Heart right ventricle (tissue), 16 donors: ENCODE measurements at regions of chr18 and their contacts with region 1.

Region 1: DNA sequence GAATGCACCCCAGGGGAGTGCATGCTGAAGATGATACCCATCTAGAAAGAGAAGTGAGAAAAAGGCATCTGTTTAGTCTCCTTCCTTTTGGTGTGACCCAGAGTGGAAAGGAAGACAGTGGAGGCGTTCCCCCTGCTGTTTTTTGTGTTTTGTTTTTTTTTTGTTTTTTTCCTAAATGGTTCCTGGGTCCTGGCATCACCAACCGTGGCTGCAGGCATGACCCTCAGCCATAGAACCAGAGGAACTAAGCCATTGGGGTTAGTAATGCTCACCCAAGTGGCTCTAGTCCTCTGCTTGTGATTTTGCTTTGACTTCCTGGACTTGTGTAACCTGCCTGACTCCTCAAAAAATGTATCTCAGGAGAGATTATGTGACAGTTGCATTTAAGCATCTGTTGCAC is 451.3 kb downstream of the DCC start:
- DNase-seq: no peak
- ATAC-seq: no peak
- H3K4me3 ChIP-seq: no peak overlapping the region
- H3K27ac ChIP-seq: no peak overlapping the region
- H3K4me1 ChIP-seq: no peaks in the 10 kb centered on the region
- H3K27me3 ChIP-seq: no peaks in the 10 kb centered on the region
- CTCF ChIP-seq: no peak

Region 2: GRCh38 chr18:52829876-52830405 is 38.6 kb after region 1 on chr18:
- intact Hi-C with region 1: loop called in 1 of 10 experiments (anchors 1 kb)
- DNase-seq: no peak
- ATAC-seq: no peak
- H3K4me3 ChIP-seq: no peak overlapping the region
- H3K27ac ChIP-seq: no peak overlapping the region
- H3K4me1 ChIP-seq: no peaks in the 10 kb centered on the region
- H3K27me3 ChIP-seq: no peaks in the 10 kb centered on the region
- CTCF ChIP-seq: no peak